CD4-positive, alpha-beta memory T cell (primary cell): ENCODE measurements at regions of chr3 and their contacts with region 1.

Region 1: GRCh38 chr3:33074217-33075067 is 22.5 kb downstream of the GLB1 start:
- DNase-seq: peak; percentile 62 to 68 (median 65)
- H3K4me3 ChIP-seq: no peak overlapping the region
- H3K4me3 Mint-ChIP-seq: peak overlapping the region in 3 of 8 donors; percentile 56 to 70 (median 67)
- H3K27ac ChIP-seq: no peak overlapping the region
- H3K27ac Mint-ChIP-seq: peak overlapping the region; percentile 34 to 75 (median 54)
- H3K4me1 ChIP-seq: peaks cover 40% of the 10 kb centered on the region
- H3K4me1 Mint-ChIP-seq: peaks cover 31 to 55% (median 43%) of the 10 kb centered on the region in 4 donors
- H3K27me3 ChIP-seq: no peaks in the 10 kb centered on the region
- H3K27me3 Mint-ChIP-seq: no peaks in the 10 kb centered on the region

Region 2: DNA sequence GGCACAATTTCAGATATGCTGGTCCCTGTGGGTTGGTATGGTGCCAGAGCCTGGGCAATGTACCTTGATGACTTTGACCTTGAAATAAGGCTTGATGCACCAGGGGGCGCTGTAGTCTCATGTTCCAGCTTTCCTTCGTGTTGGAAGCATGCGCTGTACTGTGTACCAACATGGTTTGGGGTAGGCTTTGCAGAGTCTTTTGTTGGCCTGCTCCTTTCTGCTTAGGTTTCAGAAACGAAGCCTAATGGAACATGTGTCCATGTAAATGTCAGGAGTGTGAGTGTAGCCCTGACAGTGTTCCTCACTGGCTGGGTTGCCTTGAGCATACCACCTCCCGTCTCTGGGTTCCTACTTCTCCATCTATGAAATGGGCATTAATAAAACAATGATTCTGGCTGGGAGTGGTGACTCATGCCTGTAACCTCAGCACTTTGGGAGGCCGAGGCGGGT is 126.6 kb before region 1 on chr3:
- CTCF ChIA-PET with region 1: interaction called, 402 read pairs
- POLR2A ChIA-PET with region 1: interaction called, 36 read pairs
- intact Hi-C with region 1: loop called (anchors 1 kb)
- DNase-seq: peak; percentile 82 to 89 (median 85)
- H3K4me3 ChIP-seq: no peak overlapping the region
- H3K4me3 Mint-ChIP-seq: peak overlapping the region in 2 of 8 donors; percentile 7 to 52
- H3K27ac ChIP-seq: no peak overlapping the region
- H3K27ac Mint-ChIP-seq: peak overlapping the region in 6 of 7 donors; percentile 5 to 91 (median 62)
- H3K4me1 ChIP-seq: peaks cover 42% of the 10 kb centered on the region
- H3K4me1 Mint-ChIP-seq: peaks cover 20 to 52% (median 37%) of the 10 kb centered on the region in 4 donors
- H3K27me3 ChIP-seq: no peaks in the 10 kb centered on the region
- H3K27me3 Mint-ChIP-seq: no peaks in the 10 kb centered on the region

Region 3: GRCh38 chr3:32998631-32999451 is 75.6 kb before region 1 on chr3:
- CTCF ChIA-PET with region 1: interaction called, 20 read pairs
- POLR2A ChIA-PET with region 1: no interaction called
- intact Hi-C with region 1: no loop called
- DNase-seq: peak in 1 of 5 donors; percentile 47
- H3K4me3 ChIP-seq: peak overlapping the region in 1 of 2 donors; percentile 6
- H3K4me3 Mint-ChIP-seq: peak overlapping the region in 7 of 8 donors; percentile 29 to 80 (median 61)
- H3K27ac ChIP-seq: peak overlapping the region; percentile 23
- H3K27ac Mint-ChIP-seq: peak overlapping the region; percentile 86 to 98 (median 93)
- H3K4me1 ChIP-seq: peaks cover 85% of the 10 kb centered on the region
- H3K4me1 Mint-ChIP-seq: peaks cover 54 to 93% (median 82%) of the 10 kb centered on the region in 4 donors
- H3K27me3 ChIP-seq: no peaks in the 10 kb centered on the region
- H3K27me3 Mint-ChIP-seq: no peaks in the 10 kb centered on the region

Region 4: GRCh38 chr3:33023172-33024136 is 51.0 kb before region 1 on chr3:
- CTCF ChIA-PET with region 1: interaction called, 171 read pairs
- POLR2A ChIA-PET with region 1: interaction called, 4 read pairs
- intact Hi-C with region 1: loop called (anchors 2 kb)
- DNase-seq: peak in 4 of 5 donors; percentile 50 to 71 (median 58)
- H3K4me3 ChIP-seq: no peak overlapping the region
- H3K4me3 Mint-ChIP-seq: peak overlapping the region; percentile 10 to 81 (median 70)
- H3K27ac ChIP-seq: peak overlapping the region; percentile 34
- H3K27ac Mint-ChIP-seq: peak overlapping the region; percentile 87 to 96 (median 92)
- H3K4me1 ChIP-seq: peaks cover 62% of the 10 kb centered on the region
- H3K4me1 Mint-ChIP-seq: peaks cover 48 to 76% (median 58%) of the 10 kb centered on the region in 4 donors
- H3K27me3 ChIP-seq: no peaks in the 10 kb centered on the region
- H3K27me3 Mint-ChIP-seq: no peaks in the 10 kb centered on the region

Region 5: GRCh38 chr3:33047842-33048834 is 26.3 kb before region 1 on chr3:
- CTCF ChIA-PET with region 1: interaction called, 94 read pairs
- POLR2A ChIA-PET with region 1: interaction called, 64 read pairs
- intact Hi-C with region 1: loop called (anchors 1 kb)
- DNase-seq: peak; percentile 81 to 90 (median 86)
- H3K4me3 ChIP-seq: peak overlapping the region in 1 of 2 donors; percentile 47
- H3K4me3 Mint-ChIP-seq: peak overlapping the region; percentile 70 to 95 (median 86)
- H3K27ac ChIP-seq: peak overlapping the region; percentile 36
- H3K27ac Mint-ChIP-seq: peak overlapping the region; percentile 90 to 99 (median 98)
- H3K4me1 ChIP-seq: peaks cover 89% of the 10 kb centered on the region
- H3K4me1 Mint-ChIP-seq: peaks cover 62 to 86% (median 78%) of the 10 kb centered on the region in 4 donors
- H3K27me3 ChIP-seq: no peaks in the 10 kb centered on the region
- H3K27me3 Mint-ChIP-seq: no peaks in the 10 kb centered on the region

Region 6: GRCh38 chr3:33096093-33096868 is 21.8 kb after region 1 on chr3:
- CTCF ChIA-PET with region 1: interaction called, 12 read pairs
- POLR2A ChIA-PET with region 1: no interaction called
- intact Hi-C with region 1: no loop called
- DNase-seq: peak; percentile 49 to 64 (median 58)
- H3K4me3 ChIP-seq: peak overlapping the region; percentile 21 to 83
- H3K4me3 Mint-ChIP-seq: peak overlapping the region; percentile 93 to 99 (median 98)
- H3K27ac ChIP-seq: peak overlapping the region; percentile 84
- H3K27ac Mint-ChIP-seq: peak overlapping the region; percentile 65 to 97 (median 93)
- H3K4me1 ChIP-seq: peaks cover 38% of the 10 kb centered on the region
- H3K4me1 Mint-ChIP-seq: peaks cover 27 to 53% (median 41%) of the 10 kb centered on the region in 4 donors
- H3K27me3 ChIP-seq: no peaks in the 10 kb centered on the region
- H3K27me3 Mint-ChIP-seq: no peaks in the 10 kb centered on the region

Region 7: GRCh38 chr3:33722626-33723370 is 648.4 kb after region 1 on chr3:
- CTCF ChIA-PET with region 1: no interaction called
- POLR2A ChIA-PET with region 1: no interaction called
- intact Hi-C with region 1: no loop called
- DNase-seq: no peak
- H3K4me3 ChIP-seq: no peak overlapping the region
- H3K4me3 Mint-ChIP-seq: no peak overlapping the region
- H3K27ac ChIP-seq: no peak overlapping the region
- H3K27ac Mint-ChIP-seq: no peak overlapping the region
- H3K4me1 ChIP-seq: peaks cover 9% of the 10 kb centered on the region
- H3K4me1 Mint-ChIP-seq: peaks cover 1 to 15% (median 7%) of the 10 kb centered on the region in 4 donors
- H3K27me3 ChIP-seq: no peaks in the 10 kb centered on the region
- H3K27me3 Mint-ChIP-seq: peaks cover 3 to 8% of the 10 kb centered on the region in 2 donors